Uterus (tissue), 4 donors: ENCODE measurements at regions of chr7 and their contacts with region 1.

Region 1: DNA sequence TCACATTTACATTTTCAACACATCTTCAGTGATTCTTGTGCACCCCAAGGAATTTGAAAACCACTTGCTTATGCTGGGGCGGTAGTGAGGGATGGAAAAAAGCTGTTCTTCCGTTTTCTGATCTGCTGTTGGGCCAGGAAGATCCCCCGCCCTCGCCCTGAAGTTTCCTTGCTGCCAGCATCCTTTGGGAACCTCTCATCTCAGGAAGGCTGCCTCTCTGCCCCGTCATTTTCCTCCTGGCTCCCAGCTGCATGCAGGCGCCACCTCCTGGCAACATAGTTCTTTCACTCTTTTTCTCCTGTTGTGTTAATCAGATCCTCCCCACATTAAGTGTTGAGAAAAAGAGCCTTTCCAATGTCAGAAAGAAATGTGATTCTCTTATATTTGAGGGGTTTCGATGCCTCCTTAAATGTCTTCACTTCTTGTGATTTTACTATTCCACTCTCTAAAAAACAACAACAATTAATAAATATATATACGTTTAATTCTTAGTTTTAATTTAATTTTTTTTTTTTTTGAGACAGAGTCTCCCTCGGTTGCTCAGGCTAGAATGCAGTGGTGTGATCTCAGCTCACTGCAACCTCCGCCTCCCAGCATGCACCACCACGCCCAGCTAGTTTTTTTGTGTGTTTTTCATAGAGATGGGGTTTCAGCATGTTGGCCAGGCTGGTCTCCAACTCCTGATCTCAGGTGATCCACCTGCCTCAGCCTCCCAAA is 122.9 kb downstream of the RALA start:
- DNase-seq: peak; percentile 75 to 81
- H3K4me3 ChIP-seq: no peak overlapping the region
- H3K27ac ChIP-seq: no peak overlapping the region
- H3K4me1 ChIP-seq: no peaks in the 10 kb centered on the region
- H3K27me3 ChIP-seq: no peaks in the 10 kb centered on the region
- CTCF ChIP-seq: peak; percentile 76 to 82 (median 81)
- POLR2A ChIP-seq: no peak

Region 2: DNA sequence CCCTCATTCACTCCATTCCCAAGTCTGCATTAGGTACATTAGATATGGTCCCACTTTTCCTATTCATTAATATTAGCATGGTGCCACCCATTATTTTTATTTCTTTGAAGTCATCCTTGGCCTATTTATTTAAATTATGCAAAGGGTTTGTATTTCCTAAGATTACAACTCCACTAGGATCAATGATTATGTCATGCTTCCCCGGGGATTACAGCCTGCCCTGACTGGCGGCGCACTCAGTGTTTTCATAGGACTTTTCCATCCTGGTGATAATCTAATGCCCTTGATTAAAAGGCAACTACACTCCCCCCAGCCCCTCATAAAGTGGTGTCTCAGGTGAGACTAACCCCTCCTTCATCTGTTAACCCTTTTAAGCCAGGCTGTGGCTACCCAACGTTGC is 581.4 kb before region 1 on chr7:
- intact Hi-C with region 1: no loop called
- DNase-seq: no peak
- H3K4me3 ChIP-seq: no peak overlapping the region
- H3K27ac ChIP-seq: no peak overlapping the region
- H3K4me1 ChIP-seq: no peaks in the 10 kb centered on the region
- H3K27me3 ChIP-seq: no peaks in the 10 kb centered on the region
- CTCF ChIP-seq: no peak
- POLR2A ChIP-seq: no peak

Region 3: DNA sequence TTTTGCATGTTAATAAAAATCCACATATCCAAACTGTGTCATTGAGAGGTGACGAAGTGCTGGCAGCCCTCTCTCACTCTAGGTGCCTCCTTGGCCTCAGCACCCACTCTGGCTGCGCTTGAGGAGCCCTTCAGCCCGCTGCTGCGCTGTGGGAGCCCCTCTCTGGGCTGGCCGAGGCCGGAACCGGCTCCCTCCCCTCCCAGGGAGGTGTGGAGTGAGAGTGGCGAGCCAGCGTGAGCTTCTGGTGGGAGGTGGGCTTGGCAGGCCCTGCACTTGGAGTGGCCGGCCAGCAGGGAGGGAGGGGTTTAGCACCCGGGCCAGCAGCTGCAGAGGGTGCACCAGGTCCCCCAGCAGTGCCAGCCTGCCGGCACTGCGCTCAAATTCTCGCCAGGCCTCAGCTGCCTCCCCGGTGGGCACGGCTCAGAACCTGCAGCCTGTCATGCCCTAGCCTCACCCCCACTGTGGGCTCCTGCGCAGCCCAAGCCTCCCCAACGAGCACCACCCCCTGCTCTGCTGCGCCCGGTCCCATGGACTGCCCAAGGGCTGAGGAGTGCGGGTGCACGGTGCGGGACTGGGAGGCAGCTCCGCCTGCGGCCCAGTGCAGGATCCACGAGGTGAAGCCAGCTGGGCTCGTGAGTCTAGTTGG is 168.9 kb before region 1 on chr7:
- intact Hi-C with region 1: loop called (anchors 5 kb)
- DNase-seq: no peak
- H3K4me3 ChIP-seq: no peak overlapping the region
- H3K27ac ChIP-seq: no peak overlapping the region
- H3K4me1 ChIP-seq: no peaks in the 10 kb centered on the region
- H3K27me3 ChIP-seq: no peaks in the 10 kb centered on the region
- CTCF ChIP-seq: no peak
- POLR2A ChIP-seq: no peak